ENCODE measurements at regions of chr15 and their contacts with region 1.

Region 1: DNA sequence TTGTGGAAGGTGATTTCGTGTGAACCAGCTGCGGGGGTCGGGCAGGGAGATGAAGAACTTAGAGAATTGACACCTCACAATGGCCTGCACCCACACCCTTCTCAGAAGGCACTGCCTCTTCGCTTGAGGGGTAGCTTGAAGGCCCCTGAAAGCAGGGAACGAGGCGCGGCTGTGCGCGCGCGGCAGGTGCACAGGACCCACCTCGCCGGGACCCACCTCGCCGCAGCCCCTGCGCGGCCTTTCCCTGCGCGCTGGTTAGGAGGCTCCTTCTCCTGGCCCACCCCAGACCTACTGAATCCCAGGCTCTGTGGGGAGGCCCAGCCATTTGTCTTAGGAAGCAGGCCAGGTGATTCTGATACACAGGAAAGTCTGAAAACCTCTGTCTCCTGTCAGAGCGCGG is 46.2 kb upstream of the ATP10A start:
- DNase-seq: no peak
- H3K4me3 ChIP-seq: no peak overlapping the region
- H3K27ac ChIP-seq: no peak overlapping the region
- H3K4me1 ChIP-seq: no peaks in the 10 kb centered on the region
- H3K27me3 ChIP-seq: no peaks in the 10 kb centered on the region
- CTCF ChIP-seq: no peak

Region 2: GRCh38 chr15:25635191-25635590 is 274.1 kb before region 1 on chr15:
- CTCF ChIA-PET with region 1: no interaction called
- POLR2A ChIA-PET with region 1: no interaction called
- intact Hi-C with region 1: no loop called
- DNase-seq: no peak
- H3K4me3 ChIP-seq: no peak overlapping the region
- H3K27ac ChIP-seq: no peak overlapping the region
- H3K4me1 ChIP-seq: no peaks in the 10 kb centered on the region
- H3K27me3 ChIP-seq: no peaks in the 10 kb centered on the region
- CTCF ChIP-seq: no peak

Region 3: GRCh38 chr15:26023231-26023630 is 113.9 kb after region 1 on chr15:
- CTCF ChIA-PET with region 1: no interaction called
- POLR2A ChIA-PET with region 1: interaction called, 12 read pairs
- intact Hi-C with region 1: no loop called
- DNase-seq: no peak
- H3K4me3 ChIP-seq: no peak overlapping the region
- H3K27ac ChIP-seq: no peak overlapping the region
- H3K4me1 ChIP-seq: no peaks in the 10 kb centered on the region
- H3K27me3 ChIP-seq: no peaks in the 10 kb centered on the region
- CTCF ChIP-seq: no peak

Measured in A673 (cell line).